Spleen (tissue), 13 donors: ENCODE measurements at regions of chr17 and their contacts with region 1.

Region 1: GRCh38 chr17:5584383-5585286 is at the start of gene NLRP1:
- DNase-seq: peak; percentile 98
- H3K4me3 ChIP-seq: peak within 1 kb of the TSS; percentile 40 to 78 (median 52)
- H3K27ac ChIP-seq: peak within 1 kb of the TSS; percentile 83 to 95 (median 90)
- H3K4me1 ChIP-seq: peaks cover 17 to 79% (median 66%) of the 10 kb centered on the region in 6 donors
- H3K27me3 ChIP-seq: no peaks in the 10 kb centered on the region
- CTCF ChIP-seq: peak in 1 of 11 experiments; percentile 14
- POLR2A ChIP-seq: peak in 2 of 3 donors; percentile 76 to 93
- total RNA-seq, gene NLRP1: 71.1 to 145 (median 79.0) TPM

Region 2: DNA sequence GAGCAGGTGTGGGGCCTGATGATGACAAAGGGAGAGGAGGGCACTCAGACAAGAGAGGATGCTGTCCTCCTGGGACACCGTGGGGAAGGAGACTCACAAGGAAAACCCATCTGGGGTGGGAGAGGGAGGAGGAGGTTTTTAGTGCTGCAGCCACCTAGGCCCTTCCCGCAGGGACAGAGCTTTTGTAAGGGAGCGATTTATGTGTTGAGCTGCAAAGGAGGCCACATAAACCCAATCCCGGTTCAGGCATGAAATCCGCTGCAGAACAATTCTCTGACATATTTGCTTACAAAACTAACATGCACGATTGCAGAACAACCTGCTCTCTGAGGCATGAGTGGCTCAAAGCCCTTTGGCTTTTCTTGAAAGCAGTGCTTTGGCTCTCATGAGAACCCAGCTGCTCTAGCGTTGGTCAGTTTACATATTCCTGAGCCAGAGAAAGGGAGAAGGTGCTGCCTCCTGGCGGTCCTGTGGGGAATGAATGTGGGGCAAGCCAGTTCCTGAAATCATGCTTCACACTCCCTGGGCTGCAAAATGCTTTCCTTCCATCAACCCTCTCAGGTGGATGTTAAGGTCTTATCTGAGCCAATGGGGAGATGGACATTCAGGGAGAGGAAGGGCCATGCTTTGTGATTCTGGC is 122.1 kb after region 1 on chr17:
- intact Hi-C with region 1: loop called (anchors 5 kb)
- DNase-seq: peak; percentile 83
- H3K4me3 ChIP-seq: no peak overlapping the region
- H3K27ac ChIP-seq: no peak overlapping the region
- H3K4me1 ChIP-seq: no peaks in the 10 kb centered on the region
- H3K27me3 ChIP-seq: peaks cover 0 to 27% (median 0%) of the 10 kb centered on the region in 7 donors
- CTCF ChIP-seq: peak; percentile 51 to 85 (median 76)
- POLR2A ChIP-seq: no peak

Region 3: DNA sequence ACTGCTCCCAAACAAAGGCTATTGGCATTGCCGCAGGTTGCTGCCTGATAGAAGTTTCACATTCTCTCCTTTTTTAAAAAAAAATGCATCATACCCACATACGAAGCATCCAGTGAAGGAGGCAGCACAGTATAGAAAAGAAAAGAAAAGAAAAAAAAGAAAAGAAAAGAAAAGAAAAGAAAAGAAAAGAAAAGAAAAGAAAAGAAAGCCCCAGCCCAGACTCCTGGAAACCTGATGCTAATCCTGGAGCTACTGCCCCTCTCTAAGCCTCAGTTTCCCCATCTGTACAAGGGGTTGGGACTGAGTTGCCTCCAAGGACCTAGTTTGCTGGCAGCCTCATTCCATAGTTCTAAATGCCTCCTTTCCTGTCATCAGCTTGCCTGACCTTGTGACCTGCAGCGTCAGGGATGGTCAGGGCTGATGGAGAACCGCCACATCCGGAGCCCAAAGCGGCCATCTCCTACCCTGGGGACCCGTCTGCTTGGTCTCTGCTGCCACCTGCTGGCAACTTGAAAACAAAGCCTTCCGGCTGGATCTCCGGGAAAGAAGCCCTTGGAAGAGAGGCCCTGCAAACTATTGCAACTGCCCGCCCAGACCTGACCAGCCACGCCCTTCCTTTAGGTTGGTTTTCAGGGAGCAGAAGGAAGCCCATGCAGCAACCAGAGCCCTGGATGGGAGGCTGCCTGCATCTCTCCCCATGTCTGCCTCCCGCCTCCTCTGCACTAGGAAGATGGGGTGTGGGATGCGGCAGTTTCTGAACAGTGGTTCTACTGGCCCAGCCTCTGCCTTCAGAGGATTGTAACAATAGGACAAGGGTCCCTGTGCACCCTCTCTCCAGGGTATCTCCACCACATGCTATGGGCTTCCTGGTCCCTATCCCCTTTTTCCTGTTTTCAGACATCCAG is 837.3 kb after region 1 on chr17:
- intact Hi-C with region 1: loop called (anchors 5 kb)
- DNase-seq: peak; percentile 92
- H3K4me3 ChIP-seq: no peak overlapping the region
- H3K27ac ChIP-seq: no peak overlapping the region
- H3K4me1 ChIP-seq: peaks cover 0 to 15% (median 11%) of the 10 kb centered on the region in 6 donors
- H3K27me3 ChIP-seq: peaks cover 0 to 23% (median 0%) of the 10 kb centered on the region in 7 donors
- CTCF ChIP-seq: peak; percentile 59 to 89 (median 81)
- POLR2A ChIP-seq: no peak